CD4-positive, alpha-beta memory T cell (primary cell): ENCODE measurements at regions of chr7 and their contacts with region 1.

Region 1: GRCh38 chr7:13908667-13909397 is 80.6 kb downstream of the ETV1 start:
- DNase-seq: peak; percentile 18 to 46 (median 37)
- H3K4me3 ChIP-seq: no peak overlapping the region
- H3K4me3 Mint-ChIP-seq: peak overlapping the region in 7 of 8 donors; percentile 1 to 70 (median 63)
- H3K27ac ChIP-seq: no peak overlapping the region
- H3K27ac Mint-ChIP-seq: peak overlapping the region in 6 of 7 donors; percentile 2 to 53 (median 14)
- H3K4me1 ChIP-seq: peaks cover 48% of the 10 kb centered on the region
- H3K4me1 Mint-ChIP-seq: peaks cover 35 to 70% (median 55%) of the 10 kb centered on the region in 4 donors
- H3K27me3 ChIP-seq: no peaks in the 10 kb centered on the region
- H3K27me3 Mint-ChIP-seq: no peaks in the 10 kb centered on the region

Region 2: GRCh38 chr7:13850185-13850752 is 58.6 kb before region 1 on chr7:
- CTCF ChIA-PET with region 1: no interaction called
- POLR2A ChIA-PET with region 1: interaction called, 5 read pairs
- intact Hi-C with region 1: loop called (anchors 1 kb)
- DNase-seq: peak; percentile 61 to 84 (median 69)
- H3K4me3 ChIP-seq: no peak overlapping the region
- H3K4me3 Mint-ChIP-seq: peak overlapping the region; percentile 36 to 72 (median 61)
- H3K27ac ChIP-seq: peak overlapping the region; percentile 16
- H3K27ac Mint-ChIP-seq: peak overlapping the region; percentile 84 to 95 (median 88)
- H3K4me1 ChIP-seq: peaks cover 24% of the 10 kb centered on the region
- H3K4me1 Mint-ChIP-seq: peaks cover 14 to 33% (median 20%) of the 10 kb centered on the region in 4 donors
- H3K27me3 ChIP-seq: no peaks in the 10 kb centered on the region
- H3K27me3 Mint-ChIP-seq: no peaks in the 10 kb centered on the region

Region 3: DNA sequence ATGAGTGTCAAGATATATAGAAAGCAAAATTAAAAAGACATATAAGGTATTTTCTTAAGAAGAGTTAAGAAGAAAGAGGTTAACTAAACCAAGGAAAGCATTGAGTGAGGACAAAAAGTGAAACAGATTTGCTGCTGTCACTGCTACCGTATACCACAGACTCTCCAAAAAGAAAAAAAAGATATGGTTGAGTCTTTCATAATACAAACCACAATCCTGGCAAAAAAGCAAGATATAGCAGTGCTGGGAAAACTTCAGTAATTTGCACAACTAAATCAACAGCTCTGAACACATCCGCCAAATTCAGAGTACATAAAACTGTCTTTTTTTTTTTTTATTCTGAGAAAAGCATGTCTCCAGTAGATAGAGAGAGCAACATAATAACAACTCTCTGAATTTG is 34.0 kb before region 1 on chr7:
- CTCF ChIA-PET with region 1: no interaction called
- POLR2A ChIA-PET with region 1: no interaction called
- intact Hi-C with region 1: loop called (anchors 5 kb)
- DNase-seq: peak in 4 of 5 donors; percentile 11 to 37 (median 16)
- H3K4me3 ChIP-seq: no peak overlapping the region
- H3K4me3 Mint-ChIP-seq: peak overlapping the region in 6 of 8 donors; percentile 3 to 61 (median 34)
- H3K27ac ChIP-seq: no peak overlapping the region
- H3K27ac Mint-ChIP-seq: peak overlapping the region in 2 of 7 donors; percentile 43 to 72
- H3K4me1 ChIP-seq: peaks cover 13% of the 10 kb centered on the region
- H3K4me1 Mint-ChIP-seq: peaks cover 9 to 17% (median 13%) of the 10 kb centered on the region in 4 donors
- H3K27me3 ChIP-seq: no peaks in the 10 kb centered on the region
- H3K27me3 Mint-ChIP-seq: peaks cover 0 to 2% of the 10 kb centered on the region in 2 donors

Region 4: DNA sequence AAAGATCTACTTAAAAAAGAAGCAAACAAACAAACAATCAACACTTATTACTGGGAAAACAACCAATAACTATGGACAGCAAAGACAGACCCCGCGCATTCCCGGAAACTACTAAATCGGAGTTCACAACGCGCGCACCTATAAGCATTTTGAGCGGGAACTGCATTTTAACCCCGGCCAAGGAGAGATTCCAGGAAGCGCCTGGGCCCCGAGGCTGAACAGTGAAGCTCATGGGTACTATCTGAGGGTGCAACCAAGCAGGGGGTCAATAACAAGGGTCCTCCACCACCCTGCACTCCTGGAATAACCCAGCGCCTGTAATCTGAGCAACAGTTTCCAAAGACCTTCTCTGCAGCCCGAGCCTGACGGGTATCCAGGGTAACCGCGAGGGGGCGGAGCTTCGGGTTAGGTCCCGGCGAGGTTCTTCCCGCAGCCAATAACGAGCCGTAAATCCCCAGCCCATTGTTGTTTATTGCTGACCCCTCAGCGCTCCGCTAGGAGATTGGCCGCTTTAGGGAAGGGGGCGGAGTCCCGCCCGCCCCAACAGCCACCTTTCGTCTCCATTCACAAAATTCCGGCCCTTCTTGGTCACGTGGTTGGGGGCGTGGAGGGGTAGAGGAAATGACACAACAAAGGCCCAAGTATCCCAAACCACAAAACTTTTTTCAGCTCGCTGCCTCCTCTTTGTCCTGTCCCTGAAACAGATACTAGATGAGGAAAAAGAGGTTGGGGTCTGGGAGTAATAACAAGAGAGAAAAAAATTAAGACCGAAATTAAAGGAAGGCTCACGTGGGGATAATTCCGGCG is 82.4 kb after region 1 on chr7:
- CTCF ChIA-PET with region 1: no interaction called
- POLR2A ChIA-PET with region 1: interaction called, 3 read pairs
- intact Hi-C with region 1: loop called (anchors 5 kb)
- DNase-seq: peak; percentile 39 to 67 (median 49)
- H3K4me3 ChIP-seq: peak overlapping the region; percentile 66 to 75
- H3K4me3 Mint-ChIP-seq: no peak overlapping the region
- H3K27ac ChIP-seq: no peak overlapping the region
- H3K27ac Mint-ChIP-seq: no peak overlapping the region
- H3K4me1 ChIP-seq: peaks cover 16% of the 10 kb centered on the region
- H3K4me1 Mint-ChIP-seq: no peaks in the 10 kb centered on the region
- H3K27me3 ChIP-seq: peaks cover 7% of the 10 kb centered on the region
- H3K27me3 Mint-ChIP-seq: no peaks in the 10 kb centered on the region